ENCODE measurements at regions of chr19 and their contacts with region 1.

Region 1: DNA sequence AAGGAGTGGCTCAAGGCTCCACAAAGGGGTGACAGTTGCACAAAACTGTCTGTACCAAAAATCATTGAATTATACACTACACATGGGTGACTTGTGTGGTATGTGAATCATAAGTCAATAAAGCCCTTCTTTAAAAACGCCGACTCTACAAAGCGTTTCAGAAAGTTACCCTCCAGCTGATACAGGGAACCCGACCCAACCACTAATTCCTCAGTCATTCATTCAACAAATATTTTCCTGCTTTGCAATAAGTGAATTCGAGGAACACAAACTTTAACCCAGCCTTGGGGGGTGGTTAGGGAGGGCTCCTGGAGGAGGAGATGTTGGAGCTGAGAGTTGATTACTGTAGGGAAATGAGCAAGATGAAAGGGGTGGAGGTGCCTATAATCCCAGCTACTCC is 32.0 kb downstream of the LTBP4 start:
- DNase-seq: no peak
- H3K4me3 ChIP-seq: no peak overlapping the region
- H3K27ac ChIP-seq: peak overlapping the region in 1 of 5 donors; percentile 36
- H3K4me1 ChIP-seq: peaks cover 3 to 12% (median 9%) of the 10 kb centered on the region in 4 donors
- H3K27me3 ChIP-seq: peaks cover 0 to 12% (median 0%) of the 10 kb centered on the region in 3 donors
- CTCF ChIP-seq: no peak
- EP300 ChIP-seq: no peak
- POLR2A ChIP-seq: no peak

Region 2: DNA sequence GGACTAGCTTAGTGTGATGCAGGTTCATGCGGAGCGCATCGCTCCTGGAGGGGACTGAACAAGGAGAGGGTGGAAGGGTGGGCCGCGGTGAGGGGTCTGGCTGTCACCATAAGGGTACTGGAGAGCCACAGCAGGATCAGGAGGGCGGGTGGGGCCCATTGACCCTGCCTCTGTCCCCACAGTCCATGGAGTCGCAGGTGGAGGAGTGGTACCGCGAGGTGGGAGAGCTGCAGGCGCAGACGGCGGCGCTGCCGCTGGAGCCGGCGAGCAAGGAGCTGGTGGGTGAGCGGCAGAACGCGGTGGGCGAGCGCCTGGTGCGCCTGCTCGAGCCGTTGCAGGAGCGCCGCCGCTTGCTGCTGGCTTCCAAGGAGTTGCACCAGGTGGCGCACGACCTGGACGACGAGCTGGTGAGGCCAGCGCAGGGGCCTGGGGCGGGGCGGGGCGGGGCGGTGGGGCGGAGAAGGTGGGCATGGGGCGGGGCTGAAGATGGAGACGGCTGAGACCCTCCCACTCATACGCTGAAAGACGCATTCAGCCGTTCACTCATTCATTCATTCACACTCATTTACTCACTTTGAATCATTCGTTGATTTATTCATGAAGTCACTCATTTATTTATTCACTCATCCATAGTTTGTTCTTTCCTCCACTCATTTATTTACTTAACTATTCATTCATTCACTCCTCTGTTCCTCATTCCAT is 84.0 kb before region 1 on chr19:
- intact Hi-C with region 1: loop called (anchors 5 kb)
- DNase-seq: peak; percentile 72 to 84
- H3K4me3 ChIP-seq: no peak overlapping the region
- H3K27ac ChIP-seq: no peak overlapping the region
- H3K4me1 ChIP-seq: peaks cover 0 to 16% (median 11%) of the 10 kb centered on the region in 4 donors
- H3K27me3 ChIP-seq: peaks cover 0 to 61% (median 23%) of the 10 kb centered on the region in 3 donors
- CTCF ChIP-seq: peak in 4 of 7 experiments; percentile 8 to 62 (median 38)
- EP300 ChIP-seq: no peak
- POLR2A ChIP-seq: no peak

Region 3: GRCh38 chr19:40739128-40739839 is 106.1 kb after region 1 on chr19:
- intact Hi-C with region 1: no loop called
- DNase-seq: no peak
- H3K4me3 ChIP-seq: no peak overlapping the region
- H3K27ac ChIP-seq: peak overlapping the region in 2 of 5 donors; percentile 42 to 62
- H3K4me1 ChIP-seq: peaks cover 0 to 25% (median 16%) of the 10 kb centered on the region in 4 donors
- H3K27me3 ChIP-seq: no peaks in the 10 kb centered on the region
- CTCF ChIP-seq: no peak
- EP300 ChIP-seq: no peak
- POLR2A ChIP-seq: no peak

Measured in stomach (tissue), 19 donors.